Calu3 (cell line): ENCODE measurements at regions of chr14 and their contacts with region 1.

Region 1: GRCh38 chr14:35154016-35154415 is 31.7 kb downstream of the PRORP start:
- DNase-seq: no peak
- H3K4me3 Mint-ChIP-seq: no peak overlapping the region
- H3K27ac Mint-ChIP-seq: no peak overlapping the region
- H3K4me1 Mint-ChIP-seq: peaks cover 19% of the 10 kb centered on the region
- H3K27me3 Mint-ChIP-seq: no peaks in the 10 kb centered on the region
- CTCF ChIP-seq: no peak

Region 2: GRCh38 chr14:35189422-35189821 is 35.4 kb after region 1 on chr14:
- CTCF ChIA-PET with region 1: interaction called, 3 read pairs
- intact Hi-C with region 1: loop called (anchors 5 kb)
- DNase-seq: no peak
- H3K4me3 Mint-ChIP-seq: no peak overlapping the region
- H3K27ac Mint-ChIP-seq: no peak overlapping the region
- H3K4me1 Mint-ChIP-seq: peaks cover 34% of the 10 kb centered on the region
- H3K27me3 Mint-ChIP-seq: no peaks in the 10 kb centered on the region
- CTCF ChIP-seq: no peak